Panc1 (cell line): ENCODE measurements at regions of chr3 and their contacts with region 1.

Region 1: GRCh38 chr3:129343643-129344332 is 65.1 kb downstream of the HMCES start:
- DNase-seq: no peak
- ATAC-seq: peak; percentile 93
- H3K4me3 ChIP-seq: peak overlapping the region; percentile 39 to 54
- H3K27ac ChIP-seq: peak overlapping the region; percentile 9
- H3K4me1 ChIP-seq: peaks cover 9% of the 10 kb centered on the region; the same call in 1 of the 2 replicates
- H3K27me3 ChIP-seq: no peaks in the 10 kb centered on the region
- CTCF ChIP-seq: peak; percentile 98

Region 2: GRCh38 chr3:129004639-129005295 is 339.0 kb before region 1 on chr3:
- CTCF ChIA-PET with region 1: interaction called, 11 read pairs
- POLR2A ChIA-PET with region 1: no interaction called
- in situ Hi-C with region 1: no loop called
- intact Hi-C with region 1: no loop called
- DNase-seq: no peak
- ATAC-seq: no peak
- H3K4me3 ChIP-seq: no peak overlapping the region
- H3K27ac ChIP-seq: no peak overlapping the region
- H3K4me1 ChIP-seq: peaks cover 9% of the 10 kb centered on the region; the same call in 1 of the 2 replicates
- H3K27me3 ChIP-seq: peaks cover 25% of the 10 kb centered on the region
- CTCF ChIP-seq: no peak

Region 3: DNA sequence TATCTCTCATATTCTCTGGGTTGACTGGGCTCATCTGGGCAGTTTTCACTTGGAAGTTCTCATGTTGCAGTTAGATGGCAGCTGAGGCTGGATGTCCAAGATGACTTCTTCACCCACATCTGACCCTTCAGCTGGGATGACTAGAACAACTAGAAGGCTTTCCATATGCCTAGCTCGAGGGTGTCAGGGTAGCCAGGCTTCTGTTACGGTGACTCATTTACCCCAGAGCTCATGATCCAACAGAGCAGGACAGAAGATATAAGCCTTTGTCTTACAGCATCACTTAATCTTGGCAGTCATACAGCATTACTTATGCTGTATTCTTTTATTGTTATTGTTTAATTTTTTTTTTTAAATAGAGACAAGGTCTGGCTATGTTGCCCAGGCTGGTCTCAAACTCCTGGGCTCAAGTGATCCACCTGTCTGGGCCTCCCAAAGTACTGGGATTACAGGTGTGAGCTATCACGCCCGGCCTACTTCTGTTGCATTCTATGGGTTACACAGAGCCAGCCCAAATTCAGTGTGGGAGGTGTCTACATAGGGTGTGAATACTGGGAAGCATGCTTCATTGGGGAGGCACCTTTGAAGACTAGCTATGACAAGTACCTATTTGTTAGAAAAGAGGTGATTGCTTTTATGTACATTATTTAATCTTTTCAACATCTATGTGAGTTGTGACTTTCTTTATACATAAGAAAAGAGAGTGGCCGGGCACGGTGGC is 54.4 kb before region 1 on chr3:
- CTCF ChIA-PET with region 1: no interaction called
- POLR2A ChIA-PET with region 1: no interaction called
- in situ Hi-C with region 1: no loop called
- intact Hi-C with region 1: no loop called
- DNase-seq: no peak
- ATAC-seq: 0 out of 2 replicates have a peak, but pooled peaks have one; percentile 39
- H3K4me3 ChIP-seq: no peak overlapping the region
- H3K27ac ChIP-seq: no peak overlapping the region
- H3K4me1 ChIP-seq: no peaks in the 10 kb centered on the region
- H3K27me3 ChIP-seq: no peaks in the 10 kb centered on the region
- CTCF ChIP-seq: no peak

Region 4: DNA sequence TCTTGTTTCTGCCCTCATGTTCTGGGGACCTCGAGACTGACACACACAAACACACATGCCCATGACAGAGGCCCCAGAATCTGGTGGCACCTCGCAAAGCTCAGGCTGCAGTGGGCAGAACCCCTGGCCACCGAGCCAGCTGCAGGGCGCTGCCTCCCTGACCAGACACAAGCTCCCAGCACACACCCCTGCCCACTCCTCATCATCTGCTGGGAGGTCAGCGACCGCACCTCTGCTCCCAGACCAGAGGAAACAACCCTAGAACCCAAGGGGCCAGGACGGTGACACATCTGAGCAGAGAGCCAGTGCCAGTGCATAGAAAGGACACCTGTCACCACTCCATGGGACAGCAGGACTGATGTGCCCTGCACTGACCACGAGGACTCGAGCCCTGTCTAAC is 21.9 kb before region 1 on chr3:
- CTCF ChIA-PET with region 1: interaction called, 3 read pairs
- POLR2A ChIA-PET with region 1: interaction called, 17 read pairs
- in situ Hi-C with region 1: no loop called
- intact Hi-C with region 1: no loop called
- DNase-seq: no peak
- ATAC-seq: no peak
- H3K4me3 ChIP-seq: no peak overlapping the region
- H3K27ac ChIP-seq: no peak overlapping the region
- H3K4me1 ChIP-seq: peaks cover 2% of the 10 kb centered on the region; the same call in 1 of the 2 replicates
- H3K27me3 ChIP-seq: no peaks in the 10 kb centered on the region
- CTCF ChIP-seq: no peak